ENCODE measurements at regions of chr5 and their contacts with region 1.

Region 1: DNA sequence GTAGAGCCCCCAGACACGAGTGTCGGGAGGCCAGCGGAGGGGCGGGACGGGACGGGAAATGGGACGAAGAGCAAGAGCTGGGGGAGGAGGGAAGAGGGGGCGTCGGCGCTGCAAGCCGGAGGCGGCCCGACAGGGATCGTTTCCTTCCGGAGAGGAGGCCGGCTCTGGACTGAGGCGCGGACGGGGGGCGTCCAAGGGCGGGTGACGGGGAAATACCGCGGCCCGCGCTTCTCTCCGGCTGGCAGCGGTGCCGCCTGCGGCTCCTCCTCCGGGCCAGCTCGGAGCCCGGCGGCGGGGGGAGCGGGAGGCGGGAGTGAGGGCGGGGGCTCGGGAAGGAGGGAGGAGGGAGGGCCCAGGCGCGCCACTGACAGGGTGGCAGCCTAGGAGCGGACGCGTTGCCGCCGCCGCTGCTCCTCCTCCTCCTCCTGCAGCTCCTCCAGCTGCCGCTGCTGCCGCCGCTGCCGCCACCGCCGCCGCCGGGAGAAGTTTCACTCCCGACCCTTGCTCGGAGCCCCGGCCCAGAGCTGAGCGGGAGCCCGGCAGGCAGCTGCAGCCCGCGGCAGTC is at the start of gene CHSY3:
- DNase-seq: peak; percentile 86
- H3K4me3 ChIP-seq: peak within 1 kb of the TSS; percentile 11 to 62 (median 57)
- H3K27ac ChIP-seq: no peak within 1 kb of the TSS
- H3K4me1 ChIP-seq: peaks cover 14% of the 10 kb centered on the region
- H3K27me3 ChIP-seq: peaks cover 18% of the 10 kb centered on the region
- CTCF ChIP-seq: no peak
- total RNA-seq, gene CHSY3: 1.7 to 1.8 TPM

Region 2: GRCh38 chr5:129496421-129496820 is 407.8 kb before region 1 on chr5:
- CTCF ChIA-PET with region 1: no interaction called
- dilution Hi-C with region 1: no loop called
- in situ Hi-C with region 1: no loop called
- intact Hi-C with region 1: no loop called
- DNase-seq: no peak
- H3K4me3 ChIP-seq: no peak overlapping the region
- H3K27ac ChIP-seq: no peak overlapping the region
- H3K4me1 ChIP-seq: no peaks in the 10 kb centered on the region
- H3K27me3 ChIP-seq: no peaks in the 10 kb centered on the region
- CTCF ChIP-seq: no peak

Region 3: GRCh38 chr5:129687941-129688340 is 216.2 kb before region 1 on chr5:
- CTCF ChIA-PET with region 1: no interaction called
- dilution Hi-C with region 1: no loop called
- in situ Hi-C with region 1: no loop called
- intact Hi-C with region 1: no loop called
- DNase-seq: no peak
- H3K4me3 ChIP-seq: no peak overlapping the region
- H3K27ac ChIP-seq: no peak overlapping the region
- H3K4me1 ChIP-seq: no peaks in the 10 kb centered on the region
- H3K27me3 ChIP-seq: no peaks in the 10 kb centered on the region
- CTCF ChIP-seq: no peak

Region 4: GRCh38 chr5:129698661-129699060 is 205.5 kb before region 1 on chr5:
- CTCF ChIA-PET with region 1: no interaction called
- dilution Hi-C with region 1: no loop called
- in situ Hi-C with region 1: no loop called
- intact Hi-C with region 1: no loop called
- DNase-seq: no peak
- H3K4me3 ChIP-seq: no peak overlapping the region
- H3K27ac ChIP-seq: no peak overlapping the region
- H3K4me1 ChIP-seq: no peaks in the 10 kb centered on the region
- H3K27me3 ChIP-seq: no peaks in the 10 kb centered on the region
- CTCF ChIP-seq: peak; percentile 3 to 10

Region 5: DNA sequence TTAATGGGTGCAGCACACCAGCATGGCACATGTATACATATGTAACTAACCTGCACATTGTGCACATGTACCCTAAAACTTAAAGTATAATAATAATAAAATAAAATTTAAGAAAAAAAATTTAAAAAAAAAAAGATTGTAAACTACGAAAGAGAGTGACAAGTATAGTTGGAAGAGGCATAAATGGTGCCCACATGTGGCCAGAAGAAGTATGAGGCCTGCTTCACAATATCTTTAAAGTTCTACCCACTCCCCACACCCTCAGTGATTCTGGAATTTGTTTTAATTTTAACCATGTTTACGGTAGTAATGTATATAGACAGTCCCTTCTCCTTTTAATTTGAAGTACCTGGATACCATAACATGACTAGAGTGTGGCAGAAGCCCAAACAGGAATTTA is 172.8 kb after region 1 on chr5:
- CTCF ChIA-PET with region 1: no interaction called
- dilution Hi-C with region 1: no loop called
- in situ Hi-C with region 1: no loop called
- intact Hi-C with region 1: loop called (anchors 10 kb)
- DNase-seq: no peak
- H3K4me3 ChIP-seq: no peak overlapping the region
- H3K27ac ChIP-seq: no peak overlapping the region
- H3K4me1 ChIP-seq: no peaks in the 10 kb centered on the region
- H3K27me3 ChIP-seq: no peaks in the 10 kb centered on the region
- CTCF ChIP-seq: peak in 1 of 2 donors; percentile 22

Region 6: DNA sequence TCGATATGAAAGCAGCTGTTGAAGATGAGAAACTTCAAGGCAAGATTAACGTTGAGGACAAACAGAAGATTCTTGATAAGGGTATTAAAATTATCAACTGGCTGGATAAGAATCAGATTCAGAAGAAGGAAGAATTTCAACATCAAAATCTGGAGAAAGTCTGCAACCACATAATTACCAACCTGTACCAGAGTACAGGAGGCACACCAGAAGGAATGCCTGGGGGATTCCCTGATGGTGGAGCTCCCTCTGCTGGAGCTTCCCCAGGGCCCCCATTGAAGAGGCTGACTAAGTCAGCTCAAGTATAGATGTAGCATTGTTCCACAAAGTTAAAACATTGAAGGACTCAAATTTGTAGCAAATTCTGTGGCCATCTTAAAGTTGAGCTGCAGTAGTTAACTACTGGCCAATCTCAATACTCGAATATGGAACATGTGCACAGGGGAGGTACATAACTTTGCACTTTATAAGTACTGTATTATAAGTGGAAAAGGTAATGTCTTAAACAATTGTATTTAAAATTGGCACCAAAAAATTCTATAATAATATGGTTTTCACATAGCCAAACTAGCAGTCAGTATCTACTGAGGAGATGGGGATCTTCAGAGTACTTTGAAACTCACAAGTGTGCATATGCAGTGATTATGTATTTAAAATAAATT is 237.6 kb after region 1 on chr5:
- CTCF ChIA-PET with region 1: interaction called, 3 read pairs
- dilution Hi-C with region 1: no loop called
- in situ Hi-C with region 1: no loop called
- intact Hi-C with region 1: loop called (anchors 1 kb)
- DNase-seq: peak; percentile 60
- H3K4me3 ChIP-seq: no peak overlapping the region
- H3K27ac ChIP-seq: no peak overlapping the region
- H3K4me1 ChIP-seq: peaks cover 6% of the 10 kb centered on the region
- H3K27me3 ChIP-seq: no peaks in the 10 kb centered on the region
- CTCF ChIP-seq: peak; percentile 67 to 87

Region 7: DNA sequence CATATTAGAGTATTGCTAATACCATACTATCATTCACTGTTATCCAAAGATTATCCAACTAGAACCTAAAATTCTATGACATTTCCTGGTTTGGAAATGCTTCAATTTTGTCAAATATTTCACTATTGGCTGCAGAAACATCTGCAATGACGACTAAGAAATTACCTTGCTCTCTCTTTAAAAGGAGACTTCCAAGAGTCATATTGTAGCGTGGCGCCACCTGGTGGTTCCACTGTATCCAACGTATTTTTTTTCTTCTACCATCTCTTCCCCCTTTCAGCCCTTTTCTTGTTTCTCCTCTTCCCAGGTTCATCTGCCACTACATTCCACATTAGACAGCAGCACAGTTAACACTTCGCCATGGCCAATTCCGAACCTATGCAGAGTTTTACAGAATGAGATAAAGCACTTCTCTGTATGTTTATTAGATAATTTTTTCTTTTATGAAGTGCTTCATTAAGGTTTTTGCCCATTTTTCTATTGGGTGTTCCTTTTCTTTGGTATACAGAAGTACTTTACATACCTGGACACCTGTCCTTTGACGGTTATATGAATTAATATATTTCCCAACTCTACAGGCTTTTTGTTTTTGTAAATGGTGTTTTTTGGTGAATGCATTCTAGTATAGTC is 1513.2 kb after region 1 on chr5:
- CTCF ChIA-PET with region 1: no interaction called
- dilution Hi-C with region 1: no loop called
- in situ Hi-C with region 1: no loop called
- intact Hi-C with region 1: loop called (anchors 10 kb)
- DNase-seq: peak; percentile 46
- H3K4me3 ChIP-seq: no peak overlapping the region
- H3K27ac ChIP-seq: no peak overlapping the region
- H3K4me1 ChIP-seq: no peaks in the 10 kb centered on the region
- H3K27me3 ChIP-seq: no peaks in the 10 kb centered on the region
- CTCF ChIP-seq: peak; percentile 77 to 79

Measured in mammary epithelial cell (primary cell).